HEK293 (cell line): ENCODE measurements at regions of chr2 and their contacts with region 1.

Region 1: DNA sequence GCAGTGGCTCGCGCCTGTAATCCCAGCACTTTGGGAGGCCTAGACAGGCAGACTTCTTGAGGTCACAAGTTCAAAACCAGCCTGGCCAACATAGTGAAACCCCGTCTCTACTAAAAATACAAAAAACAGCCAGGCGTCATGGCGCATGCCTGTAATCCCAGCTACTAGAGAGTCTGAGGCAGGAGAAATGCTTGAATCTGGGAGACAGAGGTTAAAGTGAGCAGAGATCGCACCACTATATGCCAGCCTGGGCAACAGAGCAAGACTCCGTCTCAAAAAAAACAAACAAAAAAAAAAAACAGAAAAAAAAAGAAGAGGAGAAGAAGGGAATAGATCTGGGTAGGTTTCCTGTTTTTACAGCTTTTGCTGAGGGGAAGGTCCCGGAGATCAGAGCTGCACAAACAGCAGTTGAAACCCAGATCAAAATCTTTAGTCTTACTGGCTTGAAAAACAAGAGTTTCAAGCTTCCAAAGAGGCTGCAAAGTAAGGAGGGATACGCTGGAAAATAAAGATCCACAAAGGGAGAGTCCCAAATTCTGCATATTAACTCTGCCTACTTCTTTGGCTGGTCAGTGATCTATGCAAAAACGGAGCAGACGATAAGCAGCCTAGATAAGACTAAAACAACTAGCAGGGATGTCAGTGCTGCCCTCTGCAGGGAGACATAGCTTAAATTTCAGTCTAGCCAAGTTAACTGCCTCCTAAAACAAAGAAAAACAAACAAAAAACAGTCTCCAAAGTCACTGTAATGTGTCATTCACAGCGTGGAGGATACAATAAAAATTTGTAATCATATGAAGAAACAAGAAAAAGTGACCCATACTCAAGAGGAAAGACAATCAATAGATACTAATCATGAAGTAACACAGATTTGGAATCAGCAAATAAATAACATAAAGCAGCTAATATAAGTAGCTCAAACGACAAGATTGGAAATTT is 74.1 kb downstream of the TLK1 start:
- H3K4me3 ChIP-seq: no peak overlapping the region
- H3K27ac ChIP-seq: no peak overlapping the region
- H3K4me1 ChIP-seq: peaks cover 8% of the 10 kb centered on the region
- CTCF ChIP-seq: peak; percentile 74

Region 2: GRCh38 chr2:170973492-170974303 is 112.9 kb before region 1 on chr2:
- CTCF ChIA-PET with region 1: interaction called, 15 read pairs
- POLR2A ChIA-PET with region 1: no interaction called
- H3K4me3 ChIP-seq: peak overlapping the region; percentile 60
- H3K27ac ChIP-seq: peak overlapping the region; percentile 82
- H3K4me1 ChIP-seq: no peaks in the 10 kb centered on the region; the same call in 1 of the 2 replicates
- CTCF ChIP-seq: peak; percentile 94

Region 3: GRCh38 chr2:171109571-171109970 is 22.9 kb after region 1 on chr2:
- CTCF ChIA-PET with region 1: interaction called, 12 read pairs
- POLR2A ChIA-PET with region 1: no interaction called
- H3K4me3 ChIP-seq: no peak overlapping the region
- H3K27ac ChIP-seq: no peak overlapping the region
- H3K4me1 ChIP-seq: no peaks in the 10 kb centered on the region
- CTCF ChIP-seq: no peak

Region 4: GRCh38 chr2:171134624-171135230 is 48.1 kb after region 1 on chr2:
- CTCF ChIA-PET with region 1: interaction called, 12 read pairs
- POLR2A ChIA-PET with region 1: no interaction called
- H3K4me3 ChIP-seq: no peak overlapping the region
- H3K27ac ChIP-seq: no peak overlapping the region
- H3K4me1 ChIP-seq: peaks cover 9% of the 10 kb centered on the region; the same call in 1 of the 2 replicates
- CTCF ChIP-seq: no peak

Region 5: GRCh38 chr2:171416009-171416926 is 329.6 kb after region 1 on chr2:
- CTCF ChIA-PET with region 1: interaction called, 14 read pairs
- POLR2A ChIA-PET with region 1: no interaction called
- H3K4me3 ChIP-seq: no peak overlapping the region
- H3K27ac ChIP-seq: no peak overlapping the region
- H3K4me1 ChIP-seq: no peaks in the 10 kb centered on the region
- CTCF ChIP-seq: peak; percentile 77